ENCODE measurements at regions of chr7 and their contacts with region 1.

Region 1: GRCh38 chr7:97835296-97836138 is 36.7 kb downstream of the ASNS start:
- DNase-seq: peak; percentile 62 to 77 (median 68)
- H3K4me3 ChIP-seq: no peak overlapping the region
- H3K27ac ChIP-seq: no peak overlapping the region
- H3K4me1 ChIP-seq: no peaks in the 10 kb centered on the region
- H3K27me3 ChIP-seq: peaks cover 0 to 28% (median 8%) of the 10 kb centered on the region in 5 experiments

Region 2: GRCh38 chr7:96709381-96710228 is 1125.9 kb before region 1 on chr7 and contains the start of gene SEM1:
- CTCF ChIA-PET with region 1: no interaction called
- POLR2A ChIA-PET with region 1: no interaction called
- DNase-seq: peak; percentile 86 to 93 (median 87)
- H3K4me3 ChIP-seq: peak within 1 kb of the TSS; percentile 82 to 95 (median 86)
- H3K27ac ChIP-seq: peak within 1 kb of the TSS; percentile 91 to 95
- H3K4me1 ChIP-seq: peaks cover 4 to 14% (median 6%) of the 10 kb centered on the region in 4 experiments
- H3K27me3 ChIP-seq: no peaks in the 10 kb centered on the region

Region 3: DNA sequence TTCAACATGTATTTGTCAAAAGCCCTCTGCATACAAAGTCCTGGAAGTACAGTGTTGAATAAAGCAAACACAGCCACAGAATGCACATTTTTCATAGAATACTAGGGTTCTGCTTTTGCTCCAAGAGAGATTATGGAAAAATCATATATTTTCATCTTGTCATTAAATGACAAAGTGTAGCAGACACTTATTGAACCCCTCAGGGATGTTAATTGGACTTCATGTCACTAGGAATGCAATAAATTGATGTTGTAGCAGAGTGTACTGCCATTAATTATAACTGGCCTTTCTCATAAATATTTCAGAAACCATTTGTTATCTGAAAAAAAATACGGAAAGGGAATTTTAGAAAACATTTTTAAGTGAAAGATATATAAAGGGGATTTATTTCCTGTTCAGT is 168.2 kb before region 1 on chr7:
- CTCF ChIA-PET with region 1: no interaction called
- POLR2A ChIA-PET with region 1: no interaction called
- DNase-seq: no peak
- H3K4me3 ChIP-seq: no peak overlapping the region
- H3K27ac ChIP-seq: no peak overlapping the region
- H3K4me1 ChIP-seq: no peaks in the 10 kb centered on the region
- H3K27me3 ChIP-seq: no peaks in the 10 kb centered on the region

Region 4: GRCh38 chr7:97770850-97771249 is 64.7 kb before region 1 on chr7:
- CTCF ChIA-PET with region 1: no interaction called
- POLR2A ChIA-PET with region 1: no interaction called
- DNase-seq: no peak
- H3K4me3 ChIP-seq: no peak overlapping the region
- H3K27ac ChIP-seq: no peak overlapping the region
- H3K4me1 ChIP-seq: no peaks in the 10 kb centered on the region
- H3K27me3 ChIP-seq: peaks cover 0 to 4% (median 0%) of the 10 kb centered on the region in 5 experiments

Region 5: DNA sequence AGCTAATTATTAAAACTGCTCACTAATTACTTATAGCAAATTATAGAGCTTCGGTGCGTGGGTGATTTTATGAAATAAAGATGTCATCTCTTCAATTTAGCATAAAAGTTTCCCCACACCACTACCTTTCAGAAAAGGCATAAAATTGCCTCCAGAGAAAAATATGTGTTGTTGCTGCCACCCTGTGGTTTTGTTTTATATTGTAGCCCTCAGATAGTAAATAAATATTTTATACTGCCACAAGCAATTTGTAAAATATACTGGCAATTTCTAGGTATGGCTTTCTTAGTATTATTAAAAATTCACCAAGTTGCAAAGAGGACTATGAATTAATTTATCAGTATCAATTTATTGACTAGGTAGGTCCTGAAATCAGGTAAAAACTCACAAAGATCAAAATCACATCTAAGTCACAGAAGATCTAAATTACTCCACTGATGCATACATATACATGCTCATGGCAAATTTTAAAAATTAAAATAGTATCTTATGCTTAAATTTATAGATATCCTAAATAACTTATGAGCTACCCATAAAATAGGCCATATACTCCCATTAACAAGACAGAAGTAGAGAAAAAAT is 10.2 kb after region 1 on chr7:
- CTCF ChIA-PET with region 1: interaction called, 16 read pairs
- POLR2A ChIA-PET with region 1: interaction called, 3 read pairs
- DNase-seq: peak; percentile 22 to 56 (median 41)
- H3K4me3 ChIP-seq: no peak overlapping the region
- H3K27ac ChIP-seq: no peak overlapping the region
- H3K4me1 ChIP-seq: no peaks in the 10 kb centered on the region
- H3K27me3 ChIP-seq: peaks cover 0 to 2% (median 0%) of the 10 kb centered on the region in 5 experiments

Region 6: DNA sequence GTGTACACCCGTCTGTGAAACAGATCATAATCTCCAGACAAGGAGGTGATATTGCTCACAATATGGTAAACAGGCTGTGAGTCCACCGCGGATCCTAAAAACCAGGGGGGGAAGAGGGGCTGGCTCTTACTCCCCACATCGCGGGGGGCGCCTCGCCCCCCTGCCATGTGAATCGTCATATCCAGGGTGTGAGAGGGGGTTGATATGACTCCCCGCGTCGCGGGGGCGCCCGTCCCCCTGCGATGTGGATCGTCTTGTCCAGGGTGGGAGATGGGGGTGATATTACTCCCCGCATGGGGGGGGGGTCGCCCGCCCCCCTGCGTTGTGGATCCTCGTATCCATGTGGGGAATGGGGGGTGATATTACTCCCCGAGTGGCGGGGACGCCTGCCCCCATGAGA is 123.5 kb after region 1 on chr7:
- CTCF ChIA-PET with region 1: no interaction called
- POLR2A ChIA-PET with region 1: no interaction called
- DNase-seq: no peak
- H3K4me3 ChIP-seq: no peak overlapping the region
- H3K27ac ChIP-seq: no peak overlapping the region
- H3K4me1 ChIP-seq: no peaks in the 10 kb centered on the region
- H3K27me3 ChIP-seq: no peaks in the 10 kb centered on the region

Measured in common myeloid progenitor, CD34-positive (primary cell).